BJ (cell line): ENCODE measurements at regions of chr16 and their contacts with region 1.

Region 1: DNA sequence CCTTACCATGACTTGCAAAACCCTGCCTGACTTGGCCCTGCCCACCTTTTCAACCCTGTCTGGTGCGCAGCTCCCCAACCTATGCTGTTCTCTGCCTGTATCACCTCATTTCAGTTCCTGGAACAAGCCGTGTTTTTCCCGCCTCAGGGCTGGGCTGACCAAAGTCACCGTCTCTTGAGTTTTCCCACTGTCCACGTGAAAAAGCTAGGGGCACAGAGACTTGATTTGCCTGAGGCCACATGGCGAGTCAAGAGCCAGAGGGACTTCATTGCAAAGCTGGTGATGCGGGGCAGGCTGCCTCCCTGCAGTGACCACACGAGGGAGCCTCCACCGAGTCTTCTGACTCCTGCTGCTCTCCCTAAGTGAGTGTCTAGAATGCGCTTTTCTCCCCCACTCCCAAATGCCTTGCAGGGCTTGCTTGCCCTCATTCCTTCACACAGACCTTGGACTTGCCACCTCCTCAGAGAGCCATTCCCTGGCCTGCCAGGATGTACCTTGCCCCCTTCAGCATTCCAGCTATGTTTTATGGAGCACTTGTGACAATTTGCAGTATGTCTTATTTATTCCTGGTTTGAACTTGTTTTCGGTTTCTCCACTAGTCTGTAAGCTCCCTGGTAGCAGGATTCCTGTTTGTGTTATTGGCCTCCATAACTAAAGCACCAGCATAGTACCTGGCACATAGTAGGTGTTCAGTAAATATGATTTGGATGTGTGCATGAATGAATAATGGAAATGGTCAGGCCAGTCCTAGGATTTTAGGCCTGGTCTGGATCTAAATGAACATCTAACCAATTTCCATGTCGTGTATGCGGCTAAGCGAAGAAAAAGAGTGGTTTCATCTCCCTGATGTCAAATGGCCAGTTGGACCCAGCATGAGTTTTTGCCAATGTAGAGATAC is 252.3 kb downstream of the SNX29 start:
- DNase-seq: peak; percentile 60
- H3K4me3 ChIP-seq: no peak overlapping the region
- H3K27me3 ChIP-seq: no peaks in the 10 kb centered on the region
- CTCF ChIP-seq: peak; percentile 90

Region 2: DNA sequence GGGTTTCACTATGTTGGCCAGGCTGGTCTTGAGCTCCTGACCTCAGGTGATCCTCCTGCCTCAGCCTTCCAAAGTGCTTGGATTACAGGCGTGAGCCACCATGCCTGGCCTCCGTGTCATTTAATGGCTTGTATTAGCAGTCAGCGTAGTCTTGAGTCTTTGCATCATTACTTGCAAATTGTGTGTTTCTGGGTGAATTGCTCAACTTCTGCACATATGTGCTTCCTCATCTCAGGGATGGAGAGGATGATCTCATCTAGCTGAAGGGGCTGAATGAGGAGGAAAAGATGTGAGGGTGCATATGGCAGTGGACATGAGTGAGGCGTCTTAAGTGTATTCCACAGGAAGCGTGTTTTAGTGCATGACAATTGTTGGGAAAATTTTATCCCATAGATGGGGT is 96.6 kb before region 1 on chr16:
- CTCF ChIA-PET with region 1: interaction called, 10 read pairs
- POLR2A ChIA-PET with region 1: no interaction called
- DNase-seq: peak; percentile 65
- H3K4me3 ChIP-seq: no peak overlapping the region
- H3K27me3 ChIP-seq: no peaks in the 10 kb centered on the region
- CTCF ChIP-seq: no peak

Region 3: GRCh38 chr16:12340151-12340733 is 111.4 kb after region 1 on chr16:
- CTCF ChIA-PET with region 1: interaction called, 16 read pairs
- POLR2A ChIA-PET with region 1: no interaction called
- DNase-seq: peak; percentile 39
- H3K4me3 ChIP-seq: no peak overlapping the region
- H3K27me3 ChIP-seq: no peaks in the 10 kb centered on the region
- CTCF ChIP-seq: peak; percentile 29; the same call in 1 of the 2 replicates